ENCODE measurements at regions of chr4 and their contacts with region 1.

Region 1: DNA sequence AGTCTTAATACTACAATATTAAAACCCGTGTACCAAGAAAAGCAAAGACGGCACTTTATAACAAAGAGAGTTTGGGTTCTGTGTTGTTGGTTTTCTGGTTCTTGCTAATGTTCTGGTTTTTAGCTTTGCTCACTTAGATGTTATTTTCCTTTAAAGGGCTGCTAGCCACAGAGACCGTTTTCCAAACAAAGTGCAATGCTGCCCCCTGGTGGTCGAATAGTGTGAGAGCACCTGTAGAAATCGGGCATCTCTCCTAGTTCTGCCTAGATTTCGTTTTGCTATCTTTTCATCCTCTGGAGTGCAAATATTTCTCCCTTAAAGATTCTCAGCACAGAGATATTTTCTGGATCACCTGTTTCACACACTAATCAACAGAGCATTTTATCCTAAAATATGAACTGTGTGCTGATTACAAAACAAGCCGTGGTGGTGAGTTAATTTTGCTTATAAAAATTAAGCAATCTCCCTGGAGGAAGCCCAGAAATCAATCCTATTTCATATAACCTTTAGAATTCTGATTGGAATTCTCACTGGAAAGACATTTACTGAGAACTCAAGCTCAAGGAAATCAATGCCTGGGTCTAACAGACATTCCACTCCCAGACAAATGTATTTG is 334.5 kb upstream of the NOCT start:
- DNase-seq: peak; percentile 81
- ATAC-seq: peak; percentile 51
- H3K4me3 Mint-ChIP-seq: no peak overlapping the region
- H3K27ac Mint-ChIP-seq: no peak overlapping the region
- H3K4me1 Mint-ChIP-seq: no peaks in the 10 kb centered on the region
- H3K27me3 Mint-ChIP-seq: peaks cover 9% of the 10 kb centered on the region

Region 2: DNA sequence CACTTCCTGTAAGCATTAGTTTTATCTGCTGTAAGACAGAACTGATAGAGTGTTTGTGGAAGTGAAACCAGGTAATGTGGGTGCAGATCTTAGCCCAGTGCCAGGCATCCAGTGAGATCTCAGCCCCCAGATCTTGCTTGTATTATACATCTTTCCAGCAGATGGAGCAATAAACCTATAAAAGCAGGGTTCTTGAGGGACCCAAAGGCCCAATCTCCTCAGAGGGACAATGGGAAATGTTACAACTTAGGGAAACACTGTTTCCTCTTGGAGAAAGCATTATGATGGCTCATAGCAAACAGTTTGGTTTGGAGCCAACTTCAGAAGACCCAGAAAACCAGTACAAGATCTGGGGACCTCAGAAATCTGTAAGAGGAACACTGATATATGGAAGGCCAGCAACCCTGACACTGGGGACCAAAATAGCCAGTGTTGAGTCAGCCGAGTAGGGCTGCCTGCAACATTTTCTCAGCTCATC is 645.3 kb before region 1 on chr4:
- CTCF ChIA-PET with region 1: interaction called, 10 read pairs
- POLR2A ChIA-PET with region 1: no interaction called
- DNase-seq: no peak
- ATAC-seq: peak; percentile 36
- H3K4me3 Mint-ChIP-seq: no peak overlapping the region
- H3K27ac Mint-ChIP-seq: no peak overlapping the region
- H3K4me1 Mint-ChIP-seq: no peaks in the 10 kb centered on the region
- H3K27me3 Mint-ChIP-seq: no peaks in the 10 kb centered on the region

Region 3: DNA sequence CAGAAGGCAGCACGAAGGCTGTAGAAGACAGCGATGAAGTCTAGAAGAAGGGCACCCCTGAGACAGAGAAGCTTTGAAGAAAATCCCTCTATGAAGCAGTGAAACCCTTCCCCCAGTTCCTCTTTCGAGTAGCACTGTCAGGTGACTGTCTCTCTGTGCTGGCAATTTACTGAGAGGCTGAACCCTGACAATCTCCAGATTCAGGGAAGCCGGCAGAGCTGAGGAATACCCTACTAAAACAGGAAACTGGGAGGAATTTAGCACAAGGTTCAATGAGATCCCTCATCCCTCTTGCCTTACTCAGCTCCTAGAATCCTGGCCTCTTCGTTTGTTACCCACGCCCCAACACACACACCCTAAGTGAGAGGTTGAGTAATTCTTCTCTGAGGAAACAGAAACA is 94.8 kb after region 1 on chr4:
- CTCF ChIA-PET with region 1: no interaction called
- POLR2A ChIA-PET with region 1: no interaction called
- DNase-seq: no peak
- ATAC-seq: no peak
- H3K4me3 Mint-ChIP-seq: no peak overlapping the region
- H3K27ac Mint-ChIP-seq: no peak overlapping the region
- H3K4me1 Mint-ChIP-seq: no peaks in the 10 kb centered on the region
- H3K27me3 Mint-ChIP-seq: no peaks in the 10 kb centered on the region

Region 4: DNA sequence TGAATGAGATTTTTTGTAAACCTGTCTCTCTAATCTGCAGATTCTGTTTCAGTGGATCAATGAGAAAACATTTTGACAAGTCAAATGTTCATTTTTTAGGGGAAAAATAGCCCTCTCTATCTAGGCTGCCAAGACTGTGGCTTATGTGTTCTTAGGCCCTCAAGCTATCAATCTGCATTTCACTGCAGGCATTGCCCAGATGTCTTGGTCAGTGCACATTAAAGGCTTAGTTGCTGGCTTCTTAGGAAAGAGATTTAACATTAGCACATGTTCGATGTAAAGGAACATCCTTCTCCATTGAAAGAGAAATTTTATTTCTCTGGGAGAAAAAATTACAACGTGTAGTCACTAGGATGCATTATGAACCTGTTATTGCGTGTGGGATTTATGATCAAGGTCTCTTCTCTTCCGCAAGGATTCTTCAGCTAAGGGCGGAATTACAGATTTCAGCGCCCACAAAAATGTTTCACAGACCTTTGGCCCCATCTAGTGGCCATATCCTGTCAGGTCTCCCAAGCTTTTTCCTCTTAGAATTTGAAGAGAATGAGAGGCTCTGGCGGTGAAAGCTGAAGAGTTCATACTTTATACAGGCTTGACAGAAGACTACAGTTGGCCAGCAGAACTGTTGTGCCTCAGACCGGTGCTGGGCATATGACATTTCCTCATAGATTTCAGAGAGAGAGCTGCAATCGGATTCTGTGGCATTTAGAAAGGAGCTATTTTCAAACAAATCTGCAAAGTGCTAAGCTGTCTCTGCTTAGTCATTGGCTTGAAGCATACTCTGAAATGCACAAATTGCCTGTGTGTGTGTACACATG is 189.8 kb after region 1 on chr4:
- CTCF ChIA-PET with region 1: interaction called, 13 read pairs
- POLR2A ChIA-PET with region 1: no interaction called
- DNase-seq: peak; percentile 65
- ATAC-seq: no peak
- H3K4me3 Mint-ChIP-seq: no peak overlapping the region
- H3K27ac Mint-ChIP-seq: no peak overlapping the region
- H3K4me1 Mint-ChIP-seq: no peaks in the 10 kb centered on the region
- H3K27me3 Mint-ChIP-seq: peaks cover 14% of the 10 kb centered on the region